CD8-positive, alpha-beta T cell (primary cell): ENCODE measurements at regions of chr9 and their contacts with region 1.

Region 1: DNA sequence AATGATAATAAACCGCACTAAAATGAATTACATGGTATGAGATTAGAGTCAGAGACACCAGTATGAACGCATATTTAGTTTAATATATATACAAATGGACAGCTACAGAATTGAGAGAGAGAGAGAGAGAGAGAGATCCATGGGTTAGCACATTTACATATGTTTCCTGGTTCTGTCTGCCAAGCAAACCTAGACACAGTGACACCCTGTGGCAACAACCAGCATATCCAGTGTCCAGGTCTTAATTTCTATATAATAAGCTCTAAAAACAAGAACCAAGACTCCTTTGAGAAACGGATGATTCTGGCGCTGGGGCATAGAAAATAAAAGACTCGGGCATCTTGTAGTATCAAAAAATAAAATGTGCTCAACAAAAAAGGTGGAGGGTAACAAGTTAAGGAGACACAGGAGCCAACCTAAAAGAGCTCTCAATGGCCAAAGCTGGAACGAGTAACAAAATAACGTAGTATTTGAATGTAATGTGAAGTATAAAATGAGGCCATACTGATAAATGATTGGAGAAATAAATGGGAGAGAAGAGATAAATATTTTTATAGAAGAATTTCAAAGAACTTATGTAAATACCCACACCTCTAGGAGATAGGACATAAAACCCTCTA is 84.5 kb downstream of the RFX3 start:
- DNase-seq: peak in 7 of 9 experiments; percentile 6 to 69 (median 38)
- ATAC-seq: peak; percentile 79
- H3K4me3 ChIP-seq: no peak overlapping the region
- H3K4me3 Mint-ChIP-seq: no peak overlapping the region
- H3K27ac ChIP-seq: no peak overlapping the region
- H3K27ac Mint-ChIP-seq: no peak overlapping the region
- H3K4me1 ChIP-seq: no peaks in the 10 kb centered on the region
- H3K4me1 Mint-ChIP-seq: peaks cover 9% of the 10 kb centered on the region
- H3K27me3 ChIP-seq: no peaks in the 10 kb centered on the region
- H3K27me3 Mint-ChIP-seq: no peaks in the 10 kb centered on the region
- CTCF ChIP-seq: peak; percentile 47

Region 2: GRCh38 chr9:3331817-3332216 is 109.5 kb before region 1 on chr9:
- CTCF ChIA-PET with region 1: no interaction called
- POLR2A ChIA-PET with region 1: interaction called, 3 read pairs
- intact Hi-C with region 1: loop called in 1 of 2 experiments (anchors 5 kb)
- DNase-seq: peak in 1 of 9 experiments; percentile 3
- ATAC-seq: no peak
- H3K4me3 ChIP-seq: no peak overlapping the region
- H3K4me3 Mint-ChIP-seq: no peak overlapping the region
- H3K27ac ChIP-seq: no peak overlapping the region
- H3K27ac Mint-ChIP-seq: no peak overlapping the region
- H3K4me1 ChIP-seq: no peaks in the 10 kb centered on the region
- H3K4me1 Mint-ChIP-seq: no peaks in the 10 kb centered on the region
- H3K27me3 ChIP-seq: no peaks in the 10 kb centered on the region
- H3K27me3 Mint-ChIP-seq: no peaks in the 10 kb centered on the region
- CTCF ChIP-seq: no peak

Region 3: GRCh38 chr9:3549225-3549624 is 107.9 kb after region 1 on chr9:
- CTCF ChIA-PET with region 1: no interaction called
- POLR2A ChIA-PET with region 1: no interaction called
- intact Hi-C with region 1: no loop called
- DNase-seq: no peak
- ATAC-seq: no peak
- H3K4me3 ChIP-seq: no peak overlapping the region
- H3K4me3 Mint-ChIP-seq: no peak overlapping the region
- H3K27ac ChIP-seq: no peak overlapping the region
- H3K27ac Mint-ChIP-seq: no peak overlapping the region
- H3K4me1 ChIP-seq: no peaks in the 10 kb centered on the region
- H3K4me1 Mint-ChIP-seq: no peaks in the 10 kb centered on the region
- H3K27me3 ChIP-seq: no peaks in the 10 kb centered on the region
- H3K27me3 Mint-ChIP-seq: no peaks in the 10 kb centered on the region
- CTCF ChIP-seq: no peak